Cardiac septum (tissue), 1 donor: ENCODE measurements at regions of chr20 and their contacts with region 1.

Region 1: DNA sequence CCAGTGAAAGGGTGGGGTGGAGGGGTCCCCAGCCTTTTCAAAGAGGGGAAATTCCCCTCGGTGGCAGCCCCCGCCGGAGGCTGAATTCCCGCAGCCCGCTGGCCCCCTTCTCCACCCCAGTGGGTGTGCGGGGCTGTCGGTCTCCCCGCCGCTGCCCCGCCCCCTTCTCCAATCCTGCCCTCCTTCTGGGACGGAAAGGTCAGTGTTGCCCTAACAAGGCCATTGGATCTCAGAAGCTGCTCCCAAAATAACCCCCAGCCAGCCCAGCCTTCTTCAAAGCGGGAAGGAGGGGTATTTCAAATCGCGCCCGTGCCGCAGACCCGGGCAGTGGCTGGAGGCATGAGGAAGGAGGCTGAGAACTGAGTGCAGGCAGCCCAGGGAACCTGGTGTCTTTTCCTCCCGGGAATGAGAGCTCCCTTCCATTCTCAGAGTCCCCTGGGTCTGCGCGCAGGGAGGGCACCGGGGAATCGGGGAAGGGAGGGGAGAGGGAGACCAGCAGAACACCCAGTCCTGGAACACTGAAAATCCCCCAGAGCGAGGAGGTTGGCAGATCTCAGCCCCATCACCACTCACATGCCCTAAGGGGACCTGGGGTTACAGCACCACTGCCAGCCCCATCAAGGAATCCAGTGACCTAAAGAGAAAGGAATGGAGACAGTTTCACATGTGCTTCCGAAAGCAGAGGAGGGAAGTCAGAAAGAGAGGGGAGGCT is at the start of gene JPH2:
- DNase-seq: peak; percentile 89
- total RNA-seq, gene JPH2: 182 TPM

Region 2: DNA sequence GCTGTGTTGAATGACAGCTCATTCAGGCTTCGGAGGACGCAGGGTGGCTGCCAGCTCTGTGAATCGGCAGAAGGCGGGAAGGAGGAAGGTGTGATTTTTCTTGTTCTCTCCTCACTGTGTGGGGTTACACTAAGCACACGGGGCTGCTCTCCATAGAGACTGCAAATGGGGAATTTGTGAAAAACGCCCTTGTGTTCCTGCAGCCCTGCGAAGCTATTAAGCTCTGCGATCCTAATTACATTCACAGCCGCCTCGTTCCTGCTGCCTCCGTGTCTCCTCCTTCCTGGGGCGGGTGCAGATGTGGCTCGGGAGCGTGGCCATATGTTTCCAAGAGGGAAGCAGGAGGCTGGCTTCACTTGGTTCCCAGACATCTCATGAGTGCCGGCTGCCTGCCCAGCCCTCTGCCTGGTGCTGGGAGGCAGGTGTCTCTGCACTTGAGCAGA is 148.5 kb before region 1 on chr20:
- intact Hi-C with region 1: no loop called
- DNase-seq: peak; percentile 24

Region 3: DNA sequence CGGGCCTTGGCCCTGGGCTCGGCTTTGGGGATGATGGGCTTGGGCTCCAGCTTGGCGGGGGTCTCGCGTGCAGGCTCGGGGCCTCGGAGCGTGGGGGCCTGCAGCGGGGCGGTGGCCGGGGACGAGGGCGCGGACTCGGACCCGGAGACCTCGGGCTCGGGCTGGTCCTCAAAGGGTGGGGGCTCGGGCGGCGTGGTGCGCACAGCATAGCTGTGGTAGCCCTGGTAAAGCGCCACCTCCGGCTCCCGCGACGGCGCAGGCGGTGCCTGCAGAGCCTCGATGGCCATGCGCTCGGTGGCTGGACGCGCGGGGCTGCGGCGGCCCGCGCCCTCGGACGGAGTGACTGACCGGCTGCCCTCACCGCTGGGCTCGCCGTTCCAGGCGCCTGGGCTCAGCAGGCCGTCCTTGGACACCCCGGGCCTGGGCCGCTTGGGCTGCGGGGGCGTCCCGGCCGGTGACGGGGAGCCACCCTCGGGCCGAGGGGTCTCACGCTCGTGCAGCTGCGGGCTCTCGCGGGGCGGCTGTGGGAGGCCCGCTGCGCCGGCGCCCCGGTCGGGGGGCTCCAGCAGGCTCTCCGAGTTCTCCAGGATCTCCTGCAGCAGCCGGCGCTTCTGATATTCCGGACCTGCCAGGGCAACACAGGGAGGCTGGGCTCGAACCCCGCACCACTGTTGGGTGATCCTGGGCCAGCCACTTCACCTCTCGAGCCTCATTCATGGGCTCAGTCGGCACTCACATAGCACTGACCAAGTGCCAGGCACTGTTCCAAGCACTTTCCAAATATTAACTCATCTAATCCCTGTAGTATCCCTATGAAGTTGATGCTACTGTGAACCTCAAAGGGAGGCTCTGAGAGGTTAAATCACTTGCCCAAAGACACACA is 71.2 kb before region 1 on chr20:
- intact Hi-C with region 1: loop called (anchors 1 kb)
- DNase-seq: no peak

Region 4: GRCh38 chr20:44137210-44137801 is 49.9 kb before region 1 on chr20:
- intact Hi-C with region 1: loop called (anchors 2 kb)
- DNase-seq: peak; percentile 91

Region 5: DNA sequence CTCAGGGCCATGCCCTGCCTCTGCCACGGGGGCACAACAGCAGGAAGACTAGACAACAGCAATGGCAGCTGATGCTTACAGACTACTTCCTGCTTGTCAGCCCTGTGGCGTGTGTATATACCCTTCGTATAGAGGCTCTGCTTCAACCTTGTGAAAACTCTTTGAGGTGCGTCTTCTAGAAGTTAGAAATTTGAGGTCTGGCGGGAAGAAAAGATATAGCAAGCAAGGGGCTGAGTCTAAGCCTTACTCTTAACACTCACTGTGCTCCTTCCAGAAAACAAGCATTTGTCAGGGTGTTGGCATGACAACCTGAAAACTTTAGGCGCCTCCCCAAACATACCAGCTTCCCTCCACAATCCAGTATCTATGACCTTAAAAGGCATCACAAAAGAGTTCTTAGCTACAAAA is 33.6 kb before region 1 on chr20:
- intact Hi-C with region 1: loop called (anchors 5 kb)
- DNase-seq: no peak